CD14-positive monocyte (primary cell): ENCODE measurements at regions of chr11 and their contacts with region 1.

Region 1: GRCh38 chr11:123062158-123062891 is 389 bp upstream of the HSPA8 start:
- DNase-seq: peak; percentile 97 to 98 (median 98)
- H3K4me3 ChIP-seq: peak overlapping the region; percentile 55 to 98 (median 96)
- H3K4me3 Mint-ChIP-seq: peak overlapping the region; percentile 94
- H3K27ac ChIP-seq: peak overlapping the region; percentile 99 to 100
- H3K27ac Mint-ChIP-seq: peak overlapping the region; percentile 96 to 100 (median 99)
- H3K4me1 ChIP-seq: peaks cover 42 to 74% of the 10 kb centered on the region in 2 donors
- H3K4me1 Mint-ChIP-seq: peaks cover 62% of the 10 kb centered on the region
- H3K27me3 ChIP-seq: no peaks in the 10 kb centered on the region
- H3K27me3 Mint-ChIP-seq: no peaks in the 10 kb centered on the region
- CTCF ChIP-seq: no peak

Region 2: DNA sequence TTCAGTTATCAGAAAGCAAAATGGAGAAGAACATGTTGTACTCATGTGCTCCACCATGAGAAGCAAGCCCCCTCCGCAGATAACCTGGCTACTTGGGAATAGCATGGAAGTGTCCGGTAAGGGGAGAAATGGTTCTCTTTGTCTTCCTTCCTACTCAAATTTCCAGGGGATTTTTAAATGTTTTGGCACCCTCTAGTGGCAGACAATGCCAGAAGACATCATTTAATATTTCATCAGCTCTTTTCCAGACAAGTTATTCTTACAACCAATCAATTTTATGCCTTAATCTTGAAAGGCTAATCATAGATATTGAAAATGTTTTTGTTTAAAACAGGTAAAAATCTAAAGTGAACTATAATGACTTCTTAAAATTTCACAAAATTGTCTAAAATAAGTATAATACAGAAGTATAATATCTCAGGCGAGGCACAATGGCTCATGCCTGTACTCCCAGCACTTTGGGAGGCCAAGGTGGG is 208.3 kb before region 1 on chr11:
- intact Hi-C with region 1: loop called in 1 of 2 experiments (anchors 2 kb)
- DNase-seq: peak; percentile 40 to 72 (median 71)
- H3K4me3 ChIP-seq: no peak overlapping the region
- H3K4me3 Mint-ChIP-seq: no peak overlapping the region
- H3K27ac ChIP-seq: no peak overlapping the region
- H3K27ac Mint-ChIP-seq: peak overlapping the region in 2 of 7 donors; percentile 25 to 68
- H3K4me1 ChIP-seq: peaks cover 45 to 46% of the 10 kb centered on the region in 2 donors
- H3K4me1 Mint-ChIP-seq: peaks cover 44% of the 10 kb centered on the region
- H3K27me3 ChIP-seq: no peaks in the 10 kb centered on the region
- H3K27me3 Mint-ChIP-seq: peaks cover 0 to 4% (median 1%) of the 10 kb centered on the region in 3 donors
- CTCF ChIP-seq: peak; percentile 85

Region 3: GRCh38 chr11:123174196-123175183 is 112.2 kb after region 1 on chr11:
- intact Hi-C with region 1: no loop called
- DNase-seq: no peak
- H3K4me3 ChIP-seq: no peak overlapping the region
- H3K4me3 Mint-ChIP-seq: no peak overlapping the region
- H3K27ac ChIP-seq: no peak overlapping the region
- H3K27ac Mint-ChIP-seq: peak overlapping the region in 1 of 7 donors; percentile 57
- H3K4me1 ChIP-seq: no peaks in the 10 kb centered on the region
- H3K4me1 Mint-ChIP-seq: peaks cover 11% of the 10 kb centered on the region
- H3K27me3 ChIP-seq: no peaks in the 10 kb centered on the region
- H3K27me3 Mint-ChIP-seq: peaks cover 0 to 2% (median 0%) of the 10 kb centered on the region in 3 donors
- CTCF ChIP-seq: no peak